ENCODE measurements at regions of chr2 and their contacts with region 1.

Region 1: DNA sequence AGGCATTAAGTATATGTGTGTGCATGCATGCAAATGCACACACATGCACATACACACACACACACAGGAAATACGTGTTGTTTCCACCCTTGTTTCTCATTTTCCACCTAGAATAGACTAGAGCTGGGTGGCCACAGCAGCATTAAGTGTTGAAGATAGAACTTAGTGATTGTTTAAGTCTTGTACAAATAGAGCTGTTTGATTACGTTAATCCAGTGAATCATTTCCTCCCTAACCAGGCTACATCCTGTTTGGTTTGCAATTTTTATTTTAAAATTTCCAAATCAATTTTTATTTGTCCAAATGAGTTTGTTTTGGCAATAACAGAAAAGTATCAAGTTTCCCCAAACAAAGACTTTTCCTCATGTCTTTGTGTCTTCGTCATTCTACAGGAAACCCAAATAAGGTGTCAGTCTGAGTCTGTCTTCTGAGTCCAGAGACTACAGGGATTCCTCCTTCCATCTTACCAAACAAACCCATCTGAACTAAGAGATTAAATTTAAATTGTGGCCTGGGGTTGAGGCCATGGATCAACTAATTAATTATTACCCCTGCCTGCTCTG is 74.6 kb upstream of the GALNT5 start:
- DNase-seq: peak; percentile 94
- H3K4me3 ChIP-seq: no peak overlapping the region
- H3K27ac ChIP-seq: peak overlapping the region; percentile 97
- H3K4me1 ChIP-seq: peaks cover 20% of the 10 kb centered on the region
- H3K27me3 ChIP-seq: no peaks in the 10 kb centered on the region
- CTCF ChIP-seq: no peak
- POLR2A ChIP-seq: peak; percentile 44

Region 2: DNA sequence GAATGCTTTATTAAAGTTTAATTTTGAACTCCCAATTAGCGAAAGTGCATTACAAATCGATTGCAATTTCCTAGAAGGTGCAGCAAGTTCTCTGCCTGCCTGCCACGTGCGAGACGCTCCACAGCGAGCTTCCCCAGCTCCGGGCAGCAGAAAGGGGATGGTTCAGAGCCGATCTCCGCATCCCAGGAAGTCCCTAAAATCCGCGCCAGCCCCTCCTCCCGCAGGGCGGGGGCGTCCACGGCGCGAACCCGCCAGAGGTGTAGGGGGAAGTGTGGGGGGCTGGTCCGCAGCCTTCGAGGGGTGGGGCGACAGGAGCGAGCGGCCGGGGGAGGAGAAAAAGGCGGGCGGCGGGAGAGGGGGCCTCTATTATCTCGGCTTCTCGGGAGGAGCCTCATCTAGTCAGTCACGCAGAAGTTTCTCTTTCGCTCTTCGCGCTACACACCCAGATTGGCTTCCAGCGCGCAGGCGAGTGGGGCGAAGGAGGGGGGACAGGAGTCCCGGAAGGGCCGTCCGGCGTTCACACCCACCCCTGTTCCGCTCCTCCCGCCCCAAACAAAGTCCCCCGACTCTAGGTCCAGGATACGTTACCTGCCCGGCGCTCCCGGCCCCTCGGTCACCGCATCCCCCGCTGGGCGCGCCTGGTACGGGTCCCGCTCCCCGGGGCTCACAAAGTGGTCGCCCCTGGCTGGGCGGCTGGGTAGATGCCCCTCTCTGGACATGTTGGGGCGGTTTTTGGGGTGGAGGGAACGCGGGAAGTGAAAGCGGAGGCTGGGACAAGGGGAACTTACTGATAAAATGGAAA is 841.3 kb before region 1 on chr2:
- CTCF ChIA-PET with region 1: no interaction called
- POLR2A ChIA-PET with region 1: no interaction called
- dilution Hi-C with region 1: no loop called
- intact Hi-C with region 1: loop called (anchors 1 kb)
- DNase-seq: peak; percentile 83
- H3K4me3 ChIP-seq: peak overlapping the region; percentile 69 to 97 (median 87)
- H3K27ac ChIP-seq: peak overlapping the region; percentile 100
- H3K4me1 ChIP-seq: peaks cover 11% of the 10 kb centered on the region
- H3K27me3 ChIP-seq: no peaks in the 10 kb centered on the region
- CTCF ChIP-seq: no peak
- POLR2A ChIP-seq: peak; percentile 35

Region 3: DNA sequence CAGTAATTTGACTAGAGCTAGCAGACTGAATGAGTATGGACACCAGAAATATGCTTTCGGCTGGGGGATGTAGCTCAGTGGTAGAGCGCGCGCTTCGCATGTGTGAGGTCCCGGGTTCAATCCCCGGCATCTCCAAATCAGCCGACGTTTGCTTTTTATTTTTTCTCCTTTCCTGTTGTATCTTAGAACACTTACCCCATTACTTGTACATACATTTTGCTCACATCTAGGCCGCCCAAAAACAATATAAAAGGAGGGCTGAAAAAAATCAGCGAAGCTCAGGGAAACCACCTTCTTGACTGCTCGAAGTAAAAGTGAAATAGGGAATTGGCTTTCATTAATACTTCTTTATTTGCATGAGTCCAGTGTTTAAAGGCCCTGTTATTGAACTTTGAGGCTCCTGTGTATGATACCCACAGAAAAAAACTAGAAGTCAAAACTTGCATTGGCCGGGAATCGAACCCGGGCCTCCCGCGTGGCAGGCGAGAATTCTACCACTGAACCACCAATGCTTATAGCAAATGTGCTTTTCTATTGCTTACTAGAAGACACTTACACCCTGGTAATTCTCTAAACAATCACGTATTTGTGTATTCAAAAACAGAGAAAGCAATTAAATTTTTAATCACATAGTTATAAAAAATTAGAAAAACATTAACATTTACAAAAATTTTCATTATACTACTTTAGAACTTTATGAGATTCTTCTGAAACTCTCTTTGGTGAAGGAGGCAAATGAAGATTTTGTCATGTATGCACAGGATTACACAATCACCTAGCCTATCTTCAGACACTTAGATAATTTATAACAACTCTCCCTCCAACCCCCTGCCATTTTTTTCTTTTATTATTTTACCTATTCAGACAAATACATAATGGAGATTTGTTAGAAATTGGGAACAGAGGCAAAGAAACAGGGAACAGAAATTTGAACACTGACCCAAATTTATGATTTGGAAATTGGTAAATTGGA is 781.9 kb before region 1 on chr2:
- CTCF ChIA-PET with region 1: no interaction called
- POLR2A ChIA-PET with region 1: no interaction called
- dilution Hi-C with region 1: no loop called
- intact Hi-C with region 1: loop called (anchors 2 kb)
- DNase-seq: peak; percentile 91
- H3K4me3 ChIP-seq: peak overlapping the region; percentile 48 to 71 (median 49)
- H3K27ac ChIP-seq: peak overlapping the region; percentile 41
- H3K4me1 ChIP-seq: peaks cover 5% of the 10 kb centered on the region
- H3K27me3 ChIP-seq: peaks cover 0 to 5% of the 10 kb centered on the region in 2 experiments
- CTCF ChIP-seq: no peak
- POLR2A ChIP-seq: no peak

Region 4: GRCh38 chr2:156435715-156436496 is 747.0 kb before region 1 on chr2 and contains the start of gene GPD2:
- CTCF ChIA-PET with region 1: interaction called, 3 read pairs
- POLR2A ChIA-PET with region 1: no interaction called
- dilution Hi-C with region 1: no loop called
- intact Hi-C with region 1: loop called (anchors 5 kb)
- DNase-seq: peak; percentile 81
- H3K4me3 ChIP-seq: peak within 1 kb of the TSS; percentile 43 to 71 (median 58)
- H3K27ac ChIP-seq: peak within 1 kb of the TSS; percentile 92
- H3K4me1 ChIP-seq: peaks cover 20% of the 10 kb centered on the region
- H3K27me3 ChIP-seq: no peaks in the 10 kb centered on the region
- CTCF ChIP-seq: no peak
- POLR2A ChIP-seq: peak; percentile 56
- total RNA-seq, gene GPD2: 29.3 and 37.0 TPM in 2 replicates

Region 5: DNA sequence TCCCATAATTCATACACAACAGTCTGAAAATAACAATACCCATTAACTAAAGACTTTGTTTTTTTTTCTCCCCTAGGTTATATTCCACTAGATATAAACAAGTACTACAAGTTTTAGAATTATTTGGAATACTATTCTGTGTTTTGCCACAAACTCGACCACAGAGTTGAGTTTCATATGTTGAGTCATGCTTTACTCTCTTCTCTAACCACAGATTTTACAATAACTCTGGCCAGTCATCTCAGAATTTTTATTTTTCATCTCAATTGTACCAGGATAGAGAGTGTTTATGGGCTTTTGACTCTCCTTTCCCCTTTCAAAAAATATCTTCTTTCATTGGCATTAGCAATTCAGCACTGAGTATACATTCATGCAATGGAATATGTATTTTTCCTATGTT is 274.1 kb before region 1 on chr2:
- CTCF ChIA-PET with region 1: no interaction called
- POLR2A ChIA-PET with region 1: no interaction called
- dilution Hi-C with region 1: no loop called
- intact Hi-C with region 1: loop called (anchors 5 kb)
- DNase-seq: no peak
- H3K4me3 ChIP-seq: no peak overlapping the region
- H3K27ac ChIP-seq: no peak overlapping the region
- H3K4me1 ChIP-seq: peaks cover 5% of the 10 kb centered on the region
- H3K27me3 ChIP-seq: no peaks in the 10 kb centered on the region
- CTCF ChIP-seq: no peak
- POLR2A ChIP-seq: no peak

Region 6: GRCh38 chr2:157032017-157032416 is 150.9 kb before region 1 on chr2:
- CTCF ChIA-PET with region 1: interaction called, 3 read pairs
- POLR2A ChIA-PET with region 1: no interaction called
- dilution Hi-C with region 1: no loop called
- intact Hi-C with region 1: loop called (anchors 1 kb)
- DNase-seq: peak; percentile 82
- H3K4me3 ChIP-seq: no peak overlapping the region
- H3K27ac ChIP-seq: peak overlapping the region; percentile 50
- H3K4me1 ChIP-seq: peaks cover 9% of the 10 kb centered on the region
- H3K27me3 ChIP-seq: no peaks in the 10 kb centered on the region
- CTCF ChIP-seq: no peak
- POLR2A ChIP-seq: no peak

Region 7: DNA sequence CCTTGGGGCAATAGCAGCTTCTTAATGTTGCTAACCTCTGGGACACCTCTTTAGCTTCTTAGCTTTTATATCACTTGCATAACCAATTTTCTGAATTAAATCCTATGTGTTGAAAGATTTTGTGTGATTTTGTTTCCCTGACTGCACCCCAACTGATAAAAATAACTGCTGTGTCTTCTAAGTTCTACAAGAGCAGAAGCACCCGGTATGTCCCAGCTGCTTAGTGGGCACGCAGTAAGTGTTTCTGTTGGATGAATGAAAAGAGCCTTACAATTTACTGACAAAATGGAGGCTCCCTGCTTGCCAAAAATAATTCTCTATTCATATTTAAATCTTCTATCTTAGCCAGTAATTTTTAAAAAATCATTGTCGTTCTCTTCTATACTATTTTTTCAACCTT is 21.5 kb after region 1 on chr2:
- CTCF ChIA-PET with region 1: no interaction called
- POLR2A ChIA-PET with region 1: no interaction called
- dilution Hi-C with region 1: no loop called
- intact Hi-C with region 1: no loop called
- DNase-seq: no peak
- H3K4me3 ChIP-seq: no peak overlapping the region
- H3K27ac ChIP-seq: no peak overlapping the region
- H3K4me1 ChIP-seq: no peaks in the 10 kb centered on the region
- H3K27me3 ChIP-seq: no peaks in the 10 kb centered on the region
- CTCF ChIP-seq: no peak
- POLR2A ChIP-seq: no peak

Region 8: GRCh38 chr2:157339965-157340655 is 157.2 kb after region 1 on chr2:
- CTCF ChIA-PET with region 1: no interaction called
- POLR2A ChIA-PET with region 1: no interaction called
- dilution Hi-C with region 1: no loop called
- intact Hi-C with region 1: no loop called
- DNase-seq: no peak
- H3K4me3 ChIP-seq: no peak overlapping the region
- H3K27ac ChIP-seq: no peak overlapping the region
- H3K4me1 ChIP-seq: no peaks in the 10 kb centered on the region
- H3K27me3 ChIP-seq: no peaks in the 10 kb centered on the region
- CTCF ChIP-seq: no peak
- POLR2A ChIP-seq: no peak

Measured in endothelial cell of umbilical vein (primary cell).